ENCODE measurements at regions of chr20 and their contacts with region 1.

Region 1: DNA sequence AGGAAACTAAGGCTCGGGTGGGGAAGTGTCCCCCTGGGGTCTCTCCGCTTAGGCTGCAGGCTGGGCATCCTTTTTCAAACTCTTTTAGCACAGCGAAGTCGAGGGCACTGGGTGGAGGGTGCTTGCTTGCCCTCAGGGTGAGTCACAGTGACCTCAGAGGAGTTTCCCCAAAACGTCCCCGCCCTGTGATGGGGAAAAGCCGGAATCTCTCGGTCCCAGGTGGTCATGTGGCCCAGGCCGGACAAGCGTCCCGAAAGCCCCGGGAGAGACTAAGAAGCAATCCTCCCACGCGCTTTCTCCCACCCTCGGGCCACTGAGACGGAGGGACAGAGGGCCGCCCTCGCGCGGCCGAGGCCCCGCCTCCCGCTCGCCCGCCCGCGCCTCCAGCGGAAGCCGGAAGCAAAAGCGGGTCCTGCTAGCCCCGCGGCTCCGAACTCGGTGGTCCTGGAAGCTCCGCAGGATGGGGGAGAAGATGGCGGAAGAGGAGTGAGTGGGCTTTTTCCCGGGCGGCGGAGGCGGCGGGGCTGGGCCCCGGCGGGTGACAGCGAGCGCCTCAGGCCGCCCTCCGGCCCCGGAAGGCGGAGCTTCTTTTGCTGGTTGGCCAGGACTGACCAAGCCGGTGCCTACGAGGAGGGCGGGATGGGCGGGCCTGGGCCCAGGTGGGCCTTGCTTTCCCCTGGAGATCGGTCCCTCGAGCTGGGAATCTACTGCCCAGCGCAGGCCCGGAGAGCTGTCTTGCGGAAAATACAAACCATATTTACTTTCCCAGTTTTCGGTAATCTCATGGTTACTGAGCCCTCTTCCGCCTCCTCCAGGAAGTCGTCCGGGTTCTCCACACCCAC is at the start of gene SLC9A8:
- DNase-seq: peak; percentile 90 to 93 (median 93)
- ATAC-seq: peak; percentile 92 to 96 (median 96)
- H3K4me3 ChIP-seq: peak within 1 kb of the TSS; percentile 42 to 97 (median 80)
- H3K27ac ChIP-seq: peak within 1 kb of the TSS; percentile 86 to 100 (median 95)
- H3K4me1 ChIP-seq: peaks cover 4 to 24% (median 12%) of the 10 kb centered on the region in 12 donors
- H3K27me3 ChIP-seq: no peaks in the 10 kb centered on the region
- CTCF ChIP-seq: peak in 11 of 12 donors; percentile 30 to 63 (median 43)
- POLR2A ChIP-seq: peak in 1 of 2 donors; percentile 79
- total RNA-seq, gene SLC9A8: 4.6 to 12.5 (median 6.3) TPM

Region 2: DNA sequence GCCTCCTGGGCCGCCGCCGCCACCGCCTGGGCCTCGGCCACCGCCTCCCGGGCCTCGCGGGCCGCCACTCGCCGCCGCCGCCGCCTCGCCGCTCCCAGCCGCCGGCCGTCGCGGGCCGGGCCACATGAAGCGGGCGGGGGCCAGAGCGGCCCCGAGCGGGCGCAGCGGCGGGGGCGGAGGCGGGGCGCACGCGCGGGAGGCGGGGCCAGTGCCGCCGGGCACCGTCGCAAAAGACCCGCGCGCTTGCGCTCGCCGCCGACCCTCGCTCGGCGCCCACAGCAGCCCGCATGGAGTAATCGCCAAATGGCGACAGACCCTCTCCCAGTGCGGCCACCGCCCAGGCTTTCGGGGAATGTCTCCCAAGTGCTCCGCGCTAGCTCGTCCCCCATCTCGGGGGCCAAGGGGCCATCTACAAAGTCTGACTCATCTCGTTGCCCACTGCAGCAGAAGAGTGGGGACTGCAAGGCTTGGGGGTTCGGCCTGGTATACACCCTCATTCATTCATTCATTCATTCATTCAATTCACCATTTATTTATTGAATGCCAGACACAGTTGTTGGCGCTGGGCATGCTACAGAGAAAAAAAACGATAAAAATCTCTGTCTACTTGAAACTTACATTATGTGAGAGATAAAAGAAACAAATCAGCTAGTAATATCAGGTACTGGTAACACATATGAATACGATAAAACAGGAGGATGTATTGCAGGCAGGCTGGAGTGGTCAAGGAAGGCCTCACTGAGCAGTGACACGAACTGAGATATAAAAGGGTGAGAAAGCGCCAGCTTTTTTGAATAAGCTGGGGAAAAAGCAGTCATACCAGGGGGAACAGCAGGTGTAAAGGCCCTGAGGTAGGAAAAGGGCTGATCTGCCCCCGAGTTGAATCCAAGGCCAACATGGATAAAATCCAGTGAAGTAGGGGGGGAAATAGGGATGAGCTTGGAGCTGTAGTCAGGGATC is 98.7 kb before region 1 on chr20 and contains the start of gene B4GALT5:
- intact Hi-C with region 1: loop called in 7 of 10 experiments (anchors 2 to 10 kb)
- DNase-seq: peak; percentile 75 to 88 (median 80)
- ATAC-seq: peak; percentile 65 to 94 (median 86)
- H3K4me3 ChIP-seq: peak within 1 kb of the TSS; percentile 77 to 99 (median 98)
- H3K27ac ChIP-seq: peak within 1 kb of the TSS; percentile 69 to 97 (median 94)
- H3K4me1 ChIP-seq: peaks cover 0 to 46% (median 29%) of the 10 kb centered on the region in 12 donors
- H3K27me3 ChIP-seq: no peaks in the 10 kb centered on the region
- CTCF ChIP-seq: no peak
- POLR2A ChIP-seq: peak in 1 of 2 donors; percentile 41
- total RNA-seq, gene B4GALT5: 17.0 to 60.4 (median 33.5) TPM

Region 3: DNA sequence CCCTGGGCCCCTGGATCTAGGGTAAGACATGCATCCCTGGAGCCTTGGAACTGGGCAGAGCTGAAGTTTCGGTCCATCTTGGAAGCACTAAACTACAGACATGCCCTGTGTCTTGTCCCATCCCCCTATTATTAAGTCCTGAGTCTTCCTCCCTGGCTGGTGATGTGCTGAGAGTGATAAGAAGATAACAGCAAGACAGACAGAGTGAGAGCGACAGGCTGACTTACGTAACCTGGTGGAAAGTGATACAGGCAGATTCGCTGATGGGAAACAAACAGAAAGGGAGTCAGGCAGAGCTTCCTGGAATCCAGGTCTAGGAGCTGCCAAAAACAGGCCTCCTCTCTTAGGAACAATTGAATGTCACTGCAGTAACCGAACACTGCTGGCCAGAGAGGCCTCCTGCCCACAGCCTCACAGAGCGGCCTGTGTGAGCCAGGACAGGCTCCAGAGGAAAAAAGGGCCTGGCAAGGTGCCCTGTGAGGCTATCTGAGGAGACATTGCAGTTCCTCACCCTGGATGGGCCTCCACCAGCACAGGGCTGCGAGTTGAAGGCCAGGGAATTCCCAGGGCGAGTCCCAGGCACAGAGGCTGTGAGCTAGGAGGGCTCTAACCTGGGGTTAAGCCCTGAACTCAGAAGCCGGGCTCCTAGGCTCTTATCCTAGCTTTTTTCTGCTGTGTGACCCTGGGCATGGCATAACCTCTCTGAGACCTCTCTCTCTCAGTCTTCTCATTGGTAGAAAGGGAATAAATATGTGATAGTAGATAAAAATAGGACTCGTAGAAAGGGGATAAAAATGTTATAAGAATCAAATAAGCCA is 64.8 kb before region 1 on chr20:
- intact Hi-C with region 1: loop called in 1 of 10 experiments (anchors 10 kb)
- DNase-seq: peak; percentile 88 to 97 (median 93)
- ATAC-seq: peak; percentile 96 to 99 (median 98)
- H3K4me3 ChIP-seq: no peak overlapping the region
- H3K27ac ChIP-seq: peak overlapping the region; percentile 72 to 91 (median 86)
- H3K4me1 ChIP-seq: peaks cover 0 to 41% (median 17%) of the 10 kb centered on the region in 12 donors
- H3K27me3 ChIP-seq: no peaks in the 10 kb centered on the region
- CTCF ChIP-seq: no peak
- POLR2A ChIP-seq: no peak

Region 4: DNA sequence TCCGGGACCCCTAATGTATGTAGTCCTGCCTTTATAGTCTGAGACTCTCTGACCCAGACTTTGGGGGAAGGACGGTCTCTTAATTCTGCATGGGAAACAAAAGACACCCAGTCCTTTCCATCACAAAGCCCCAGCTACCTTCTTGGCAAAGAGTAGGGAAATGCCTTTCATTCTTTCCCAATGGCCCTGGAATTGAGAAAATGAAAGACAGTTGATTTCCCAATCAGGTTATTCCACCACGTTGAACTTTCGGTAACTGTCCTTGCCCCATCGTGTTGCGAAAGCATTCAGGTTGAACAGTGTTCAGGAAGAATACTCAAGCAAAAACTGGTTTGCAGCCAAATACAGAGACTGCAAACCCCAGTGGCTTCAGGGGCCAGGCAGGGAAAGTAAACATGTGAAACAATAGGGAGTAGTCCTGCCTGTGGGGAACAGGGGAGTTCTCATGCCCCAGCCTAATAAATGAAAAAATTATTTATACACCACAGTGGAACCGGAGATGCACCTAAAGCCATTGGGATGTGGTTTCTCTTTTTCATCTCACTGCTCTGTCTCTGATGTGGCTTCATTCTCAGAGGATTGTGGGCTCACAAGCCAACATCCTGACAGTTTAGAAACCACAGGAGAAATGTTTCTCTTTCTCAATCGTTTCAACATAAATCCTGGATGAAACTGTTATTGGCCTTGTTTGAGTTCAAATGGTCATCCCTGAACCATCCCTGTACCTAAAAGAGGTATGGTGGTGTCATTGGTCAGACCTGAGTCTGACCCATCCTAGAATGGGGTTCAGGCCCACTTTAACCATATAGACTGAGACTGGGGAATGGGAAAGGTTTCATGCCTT is 44.3 kb before region 1 on chr20:
- intact Hi-C with region 1: loop called in 1 of 10 experiments (anchors 2 kb)
- DNase-seq: peak in 4 of 5 donors; percentile 32 to 69 (median 35)
- ATAC-seq: peak; percentile 66 to 75 (median 70)
- H3K4me3 ChIP-seq: no peak overlapping the region
- H3K27ac ChIP-seq: peak overlapping the region; percentile 4 to 76 (median 61)
- H3K4me1 ChIP-seq: peaks cover 0 to 67% (median 18%) of the 10 kb centered on the region in 12 donors
- H3K27me3 ChIP-seq: no peaks in the 10 kb centered on the region
- CTCF ChIP-seq: no peak
- POLR2A ChIP-seq: no peak

Region 5: DNA sequence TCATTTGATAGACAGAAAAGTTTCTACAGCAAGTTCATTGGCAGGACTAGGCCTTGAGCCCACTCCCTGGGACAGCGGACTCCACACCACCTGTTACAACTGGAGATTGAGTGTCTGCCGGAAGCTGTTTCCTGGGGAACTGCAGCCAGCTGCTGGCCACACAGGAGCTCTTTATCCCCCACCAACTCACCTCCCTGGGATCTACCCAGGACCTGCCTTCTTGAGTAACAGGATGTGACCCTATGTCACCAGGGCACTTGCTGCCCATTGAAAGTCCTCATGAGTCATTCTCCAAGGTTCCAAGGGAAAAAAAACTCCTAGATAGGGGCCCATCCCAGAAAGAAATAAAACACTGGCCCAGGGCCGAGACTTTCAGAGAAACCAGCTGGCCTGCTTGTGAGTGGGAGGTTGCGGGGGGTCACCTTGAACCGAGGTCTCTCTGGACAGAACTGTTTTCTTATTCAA is 37.4 kb before region 1 on chr20:
- intact Hi-C with region 1: loop called in 2 of 10 experiments (anchors 5 kb)
- DNase-seq: peak in 3 of 5 donors; percentile 27 to 75 (median 33)
- ATAC-seq: peak in 3 of 4 donors; percentile 74 to 83 (median 82)
- H3K4me3 ChIP-seq: no peak overlapping the region
- H3K27ac ChIP-seq: peak overlapping the region in 7 of 12 donors; percentile 14 to 79 (median 46)
- H3K4me1 ChIP-seq: peaks cover 0 to 42% (median 25%) of the 10 kb centered on the region in 12 donors
- H3K27me3 ChIP-seq: no peaks in the 10 kb centered on the region
- CTCF ChIP-seq: no peak
- POLR2A ChIP-seq: no peak

Region 6: GRCh38 chr20:49791165-49791564 is 21.5 kb before region 1 on chr20:
- intact Hi-C with region 1: loop called in 1 of 10 experiments (anchors 1 kb)
- DNase-seq: no peak
- ATAC-seq: no peak
- H3K4me3 ChIP-seq: no peak overlapping the region
- H3K27ac ChIP-seq: peak overlapping the region in 8 of 12 donors; percentile 44 to 76 (median 52)
- H3K4me1 ChIP-seq: peaks cover 0 to 51% (median 7%) of the 10 kb centered on the region in 12 donors
- H3K27me3 ChIP-seq: no peaks in the 10 kb centered on the region
- CTCF ChIP-seq: no peak
- POLR2A ChIP-seq: no peak

Measured in heart left ventricle (tissue), 16 donors.